ENCODE measurements at regions of chr2 and their contacts with region 1.

Region 1: DNA sequence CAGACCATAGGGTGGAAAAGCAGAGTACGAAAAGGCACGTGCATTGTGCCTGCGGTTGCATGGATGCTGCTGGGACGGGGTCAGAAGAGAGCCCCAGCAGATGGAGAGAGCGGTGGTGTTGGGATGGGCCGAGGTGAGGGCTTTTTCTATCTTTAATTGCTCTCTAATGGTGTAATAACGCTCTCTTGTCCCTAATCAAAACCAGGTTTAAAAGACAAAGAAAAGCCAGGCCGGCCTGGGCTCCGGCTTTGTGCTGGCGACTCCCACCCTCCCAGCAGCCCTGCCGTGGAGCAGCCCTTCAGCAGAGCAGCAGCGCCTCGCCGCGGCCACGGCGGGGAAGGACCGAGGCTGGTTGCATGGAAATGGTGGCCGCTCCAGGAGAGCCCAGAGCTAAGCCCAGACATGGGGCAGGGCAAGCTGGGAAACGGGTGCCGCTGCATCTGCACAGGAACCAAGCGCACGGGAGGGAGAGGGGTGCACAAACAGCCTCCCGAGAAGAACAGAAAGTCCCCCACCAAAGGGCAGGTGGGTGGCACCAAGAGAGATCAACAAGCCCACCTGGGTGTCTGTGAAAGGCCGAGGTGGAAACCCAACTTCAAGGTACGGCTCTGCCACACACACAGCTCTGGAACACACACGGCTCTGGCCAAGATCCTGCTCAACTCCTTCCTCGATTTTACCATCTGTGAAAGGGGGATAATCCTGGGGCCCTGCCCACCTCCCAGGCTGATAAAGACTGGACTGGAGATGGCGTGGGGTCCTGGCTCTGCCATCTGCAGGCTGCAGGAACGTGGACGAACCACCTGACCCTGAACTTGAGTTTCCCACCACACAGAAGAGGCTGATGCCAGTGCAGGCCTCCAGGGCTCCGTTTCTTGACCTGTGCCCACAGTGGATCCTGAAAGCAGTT is 15.0 kb downstream of the HS1BP3 start:
- DNase-seq: no peak
- H3K4me3 ChIP-seq: no peak overlapping the region
- H3K27me3 ChIP-seq: no peaks in the 10 kb centered on the region; the same call in 1 of the 2 replicates
- CTCF ChIP-seq: peak; percentile 97

Region 2: GRCh38 chr2:20398956-20399567 is 236.9 kb before region 1 on chr2:
- CTCF ChIA-PET with region 1: interaction called, 53 read pairs
- POLR2A ChIA-PET with region 1: no interaction called
- DNase-seq: no peak
- H3K4me3 ChIP-seq: no peak overlapping the region
- H3K27me3 ChIP-seq: peaks cover 5% of the 10 kb centered on the region
- CTCF ChIP-seq: no peak

Region 3: GRCh38 chr2:20424300-20425290 is 211.3 kb before region 1 on chr2:
- CTCF ChIA-PET with region 1: interaction called, 138 read pairs
- POLR2A ChIA-PET with region 1: no interaction called
- DNase-seq: peak; percentile 73
- H3K4me3 ChIP-seq: no peak overlapping the region
- H3K27me3 ChIP-seq: peaks cover 7% of the 10 kb centered on the region; the same call in 1 of the 2 replicates
- CTCF ChIP-seq: no peak

Region 4: GRCh38 chr2:20600756-20601325 is 35.1 kb before region 1 on chr2:
- CTCF ChIA-PET with region 1: interaction called, 11 read pairs
- POLR2A ChIA-PET with region 1: no interaction called
- DNase-seq: no peak
- H3K4me3 ChIP-seq: no peak overlapping the region
- H3K27me3 ChIP-seq: no peaks in the 10 kb centered on the region
- CTCF ChIP-seq: peak; percentile 42

Region 5: DNA sequence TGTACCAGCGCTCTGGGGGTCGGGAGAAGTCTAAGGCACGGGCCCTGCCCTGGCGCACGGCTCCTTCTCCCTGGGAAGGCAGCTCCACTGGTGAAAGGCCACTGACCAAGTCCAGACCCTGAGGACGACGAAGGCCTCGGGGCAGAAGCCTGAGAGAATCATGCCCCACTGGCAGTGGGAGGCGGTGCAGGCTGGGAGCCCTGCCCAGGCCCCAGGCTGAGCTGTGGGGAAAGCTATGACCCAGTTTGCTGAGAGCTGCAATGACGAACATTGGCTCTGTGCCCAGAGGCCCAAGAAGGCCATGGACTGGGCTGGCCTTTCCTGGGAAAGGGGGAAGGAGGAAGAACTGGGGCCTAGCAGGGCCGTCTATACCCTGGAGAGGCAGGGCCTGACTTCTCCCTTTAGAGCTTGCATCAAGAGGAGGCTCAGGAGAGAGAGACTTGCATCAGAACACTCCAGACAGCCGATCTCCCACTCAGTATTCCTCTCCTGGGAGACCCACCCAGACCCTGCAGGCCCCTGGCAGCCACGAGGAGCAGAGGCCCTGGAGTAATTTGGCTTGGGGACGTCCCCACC is 17.9 kb before region 1 on chr2:
- CTCF ChIA-PET with region 1: interaction called, 14 read pairs
- POLR2A ChIA-PET with region 1: interaction called, 4 read pairs
- DNase-seq: peak; percentile 90
- H3K4me3 ChIP-seq: no peak overlapping the region
- H3K27me3 ChIP-seq: no peaks in the 10 kb centered on the region
- CTCF ChIP-seq: peak; percentile 58

Measured in BJ (cell line).